ENCODE measurements at regions of chr3 and their contacts with region 1.

Region 1: GRCh38 chr3:197298341-197298857 is at the start of gene DLG1:
- DNase-seq: peak; percentile 86
- ATAC-seq: peak; percentile 67
- H3K4me3 ChIP-seq: peak within 1 kb of the TSS; percentile 82 to 97 (median 95)
- H3K4me3 Mint-ChIP-seq: peak within 1 kb of the TSS; percentile 97
- H3K27ac ChIP-seq: peak within 1 kb of the TSS; percentile 69 to 79
- H3K27ac Mint-ChIP-seq: peak within 1 kb of the TSS; percentile 95
- H3K4me1 ChIP-seq: peaks cover 15 to 21% of the 10 kb centered on the region in 2 donors
- H3K4me1 Mint-ChIP-seq: peaks cover 26% of the 10 kb centered on the region
- H3K27me3 ChIP-seq: peaks cover 0 to 19% (median 11%) of the 10 kb centered on the region in 4 experiments
- H3K27me3 Mint-ChIP-seq: peaks cover 26% of the 10 kb centered on the region
- CTCF ChIP-seq: no peak
- total RNA-seq, gene DLG1: 114 and 117 TPM in 2 replicates

Region 2: DNA sequence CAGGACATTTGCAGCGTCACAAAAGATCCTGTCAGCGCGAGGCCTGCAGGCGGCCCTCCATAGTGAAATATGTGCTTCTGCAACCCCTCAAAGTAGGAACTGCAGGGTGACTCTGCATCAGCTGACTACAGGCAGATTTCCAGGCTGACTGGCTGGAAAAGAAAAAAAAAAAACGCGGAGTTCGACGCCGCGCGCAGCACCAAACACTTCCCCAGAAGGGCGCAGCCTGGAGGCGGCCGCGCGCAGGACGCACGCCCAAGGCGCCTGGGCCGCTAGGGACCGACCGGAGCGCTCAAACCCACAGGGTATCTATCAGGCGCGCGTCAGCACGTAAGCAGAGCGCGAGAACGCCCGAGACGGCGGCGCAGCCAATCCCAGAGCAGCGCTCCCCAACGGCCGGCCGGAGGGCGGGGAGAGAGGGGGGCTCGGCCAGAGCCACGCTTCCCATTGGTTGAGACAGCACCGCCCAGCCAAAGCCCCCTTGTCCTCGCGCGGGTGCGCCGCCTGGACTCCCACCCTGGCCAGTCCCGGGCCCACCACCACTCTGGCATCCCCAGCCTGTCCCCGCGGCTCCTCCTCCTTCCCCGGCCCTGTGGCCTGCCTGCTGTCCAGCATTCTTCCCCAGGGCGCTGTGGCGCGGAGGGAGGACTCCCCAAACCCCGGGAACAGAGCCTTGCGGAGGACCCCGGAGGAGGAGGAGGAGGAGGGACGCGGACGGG is 256.3 kb after region 1 on chr3:
- CTCF ChIA-PET with region 1: no interaction called
- POLR2A ChIA-PET with region 1: no interaction called
- intact Hi-C with region 1: loop called (anchors 1 kb)
- DNase-seq: peak; percentile 95
- ATAC-seq: peak; percentile 93
- H3K4me3 ChIP-seq: peak overlapping the region; percentile 55 to 93 (median 76)
- H3K4me3 Mint-ChIP-seq: peak overlapping the region; percentile 94
- H3K27ac ChIP-seq: peak overlapping the region; percentile 80 to 92
- H3K27ac Mint-ChIP-seq: peak overlapping the region; percentile 90
- H3K4me1 ChIP-seq: peaks cover 6 to 13% of the 10 kb centered on the region in 2 donors
- H3K4me1 Mint-ChIP-seq: peaks cover 9% of the 10 kb centered on the region
- H3K27me3 ChIP-seq: peaks cover 0 to 2% (median 0%) of the 10 kb centered on the region in 4 experiments
- H3K27me3 Mint-ChIP-seq: peaks cover 7% of the 10 kb centered on the region
- CTCF ChIP-seq: peak; percentile 61

Measured in B cell (primary cell).